ENCODE measurements at regions of chr9 and their contacts with region 1.

Region 1: DNA sequence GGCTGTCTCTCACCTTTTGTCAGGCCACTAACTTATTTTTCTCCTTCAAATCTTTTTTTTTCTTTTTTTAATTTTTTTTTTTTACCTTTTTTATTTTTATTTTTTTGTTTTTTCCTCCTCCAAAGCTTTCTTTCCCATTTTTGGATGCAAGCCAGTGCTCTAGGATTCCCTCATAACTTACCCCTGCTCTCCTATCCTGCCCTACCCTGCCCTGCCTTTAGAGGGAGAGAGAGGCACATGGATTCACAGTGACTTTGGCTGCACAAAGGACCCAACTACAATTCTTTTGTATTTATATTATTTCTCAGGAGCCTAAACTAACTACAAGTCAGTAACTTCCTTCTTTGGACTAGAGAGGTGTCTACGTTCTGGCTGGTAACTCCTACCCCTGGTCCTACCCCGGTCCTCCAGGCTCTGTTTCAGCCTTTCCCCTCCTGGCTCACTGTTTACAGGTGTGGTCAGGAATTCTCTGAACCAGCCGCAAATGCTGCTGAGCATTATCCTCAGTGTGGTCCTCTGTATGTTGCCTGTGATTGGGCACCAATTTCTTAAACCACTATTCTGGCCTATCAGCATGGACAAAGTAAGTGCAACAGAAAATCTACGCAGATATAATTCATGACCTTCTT is 8.4 kb upstream of the RUSC2 start:
- DNase-seq: peak; percentile 43
- ATAC-seq: peak; percentile 83
- H3K4me3 ChIP-seq: no peak overlapping the region
- H3K27ac ChIP-seq: peak overlapping the region; percentile 74
- H3K4me1 ChIP-seq: peaks cover 8% of the 10 kb centered on the region
- H3K27me3 ChIP-seq: no peaks in the 10 kb centered on the region
- CTCF ChIP-seq: peak; percentile 94

Region 2: GRCh38 chr9:35258676-35259474 is 222.6 kb before region 1 on chr9:
- CTCF ChIA-PET with region 1: no interaction called
- POLR2A ChIA-PET with region 1: no interaction called
- in situ Hi-C with region 1: no loop called
- intact Hi-C with region 1: loop called (anchors 5 kb)
- DNase-seq: peak; percentile 43
- ATAC-seq: peak; percentile 95
- H3K4me3 ChIP-seq: no peak overlapping the region
- H3K27ac ChIP-seq: no peak overlapping the region
- H3K4me1 ChIP-seq: no peaks in the 10 kb centered on the region
- H3K27me3 ChIP-seq: no peaks in the 10 kb centered on the region
- CTCF ChIP-seq: peak; percentile 92

Region 3: DNA sequence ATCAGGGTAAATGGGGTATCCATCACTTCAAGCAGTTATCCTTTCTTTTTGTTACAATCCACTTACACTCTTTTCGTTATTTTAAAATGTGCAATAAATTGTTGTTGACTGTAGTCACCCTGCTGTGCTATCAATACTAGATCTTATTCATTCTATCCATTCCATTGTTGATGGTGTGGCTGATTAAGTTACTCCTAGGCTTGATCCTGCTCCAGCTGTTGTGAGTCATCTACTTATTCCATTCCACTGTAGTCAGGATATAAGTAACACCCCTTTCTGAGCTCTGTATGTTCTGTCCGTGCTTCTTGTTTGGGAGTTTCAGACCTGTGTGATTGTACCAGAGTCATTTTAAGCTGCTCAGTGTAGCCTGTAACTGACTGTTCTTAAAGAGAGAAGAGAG is 114.0 kb before region 1 on chr9:
- CTCF ChIA-PET with region 1: no interaction called
- POLR2A ChIA-PET with region 1: no interaction called
- in situ Hi-C with region 1: no loop called
- intact Hi-C with region 1: no loop called
- DNase-seq: peak; percentile 12
- ATAC-seq: peak; percentile 87
- H3K4me3 ChIP-seq: no peak overlapping the region
- H3K27ac ChIP-seq: no peak overlapping the region
- H3K4me1 ChIP-seq: peaks cover 4% of the 10 kb centered on the region; the same call in 1 of the 2 replicates
- H3K27me3 ChIP-seq: no peaks in the 10 kb centered on the region
- CTCF ChIP-seq: no peak

Measured in Panc1 (cell line).